Activated CD8-positive, alpha-beta T cell treated with anti-CD3 and anti-CD28 coated beads for 36 hours (primary cell): ENCODE measurements at regions of chr7 and their contacts with region 1.

Region 1: DNA sequence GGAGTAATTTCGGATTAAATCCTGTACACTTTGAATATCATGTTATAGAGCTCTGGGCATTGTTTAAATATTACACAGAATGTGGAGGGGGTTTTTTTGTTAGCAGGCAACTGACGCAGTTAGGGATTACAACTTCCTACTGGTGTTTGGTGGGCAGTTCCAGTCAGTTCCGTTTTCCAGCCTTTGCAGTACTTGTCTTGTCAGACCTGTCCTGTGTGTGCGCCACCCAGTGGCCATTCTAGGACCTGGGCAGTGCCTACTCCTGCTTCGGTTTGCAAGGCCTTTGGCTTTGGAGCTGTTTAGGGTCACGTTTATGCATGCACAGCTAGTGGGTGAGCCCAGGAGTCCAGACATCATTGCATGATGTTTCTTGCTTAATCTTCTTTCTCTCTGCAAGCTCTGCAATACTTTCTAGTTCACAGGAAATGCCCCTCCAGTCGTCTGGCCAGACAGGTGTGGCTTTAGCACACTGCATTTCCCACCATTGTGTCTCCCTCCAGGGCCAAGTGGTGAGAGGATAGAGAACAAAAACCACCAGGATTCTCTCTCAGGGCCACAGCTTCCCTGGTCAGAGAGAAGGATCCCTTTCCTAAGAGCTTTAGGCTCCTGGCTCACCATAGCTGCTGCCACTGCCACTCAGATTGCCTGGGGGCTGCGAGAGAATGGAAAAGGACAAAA is 96.5 kb upstream of the TARP start:
- DNase-seq: peak; percentile 94
- ATAC-seq: peak; percentile 78
- H3K4me3 Mint-ChIP-seq: no peak overlapping the region
- H3K27ac Mint-ChIP-seq: peak overlapping the region; percentile 73
- H3K4me1 Mint-ChIP-seq: peaks cover 61% of the 10 kb centered on the region
- H3K27me3 Mint-ChIP-seq: no peaks in the 10 kb centered on the region
- CTCF ChIP-seq: peak; percentile 83

Region 2: DNA sequence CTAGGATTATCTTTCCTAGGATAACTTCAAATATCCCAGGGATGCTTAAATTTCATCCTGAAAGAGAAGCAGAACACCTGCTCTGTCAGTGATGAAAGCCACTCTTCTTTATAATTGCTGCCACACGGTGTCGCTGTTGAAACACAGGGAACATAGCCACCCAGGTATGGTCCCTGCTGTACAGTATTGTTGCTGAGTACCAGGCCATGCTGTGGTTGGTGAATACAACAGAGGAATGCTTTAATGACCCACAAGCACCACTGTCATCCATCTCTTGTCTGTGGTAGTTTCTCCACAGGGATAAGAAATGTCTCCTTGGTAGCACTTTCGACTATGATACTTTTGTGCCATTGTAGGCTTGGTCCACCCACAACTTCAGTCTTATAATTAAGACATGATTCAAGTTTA is 262.5 kb before region 1 on chr7:
- CTCF ChIA-PET with region 1: interaction called, 67 read pairs
- POLR2A ChIA-PET with region 1: no interaction called
- intact Hi-C with region 1: loop called (anchors 1 kb)
- DNase-seq: peak; percentile 84
- ATAC-seq: peak; percentile 87
- H3K4me3 Mint-ChIP-seq: no peak overlapping the region
- H3K27ac Mint-ChIP-seq: no peak overlapping the region
- H3K4me1 Mint-ChIP-seq: peaks cover 2% of the 10 kb centered on the region
- H3K27me3 Mint-ChIP-seq: peaks cover 8% of the 10 kb centered on the region
- CTCF ChIP-seq: peak; percentile 86

Region 3: GRCh38 chr7:38195804-38196595 is 174.0 kb before region 1 on chr7:
- CTCF ChIA-PET with region 1: interaction called, 25 read pairs
- POLR2A ChIA-PET with region 1: no interaction called
- intact Hi-C with region 1: no loop called
- DNase-seq: no peak
- ATAC-seq: no peak
- H3K4me3 Mint-ChIP-seq: no peak overlapping the region
- H3K27ac Mint-ChIP-seq: no peak overlapping the region
- H3K4me1 Mint-ChIP-seq: peaks cover 42% of the 10 kb centered on the region
- H3K27me3 Mint-ChIP-seq: no peaks in the 10 kb centered on the region
- CTCF ChIP-seq: no peak

Region 4: DNA sequence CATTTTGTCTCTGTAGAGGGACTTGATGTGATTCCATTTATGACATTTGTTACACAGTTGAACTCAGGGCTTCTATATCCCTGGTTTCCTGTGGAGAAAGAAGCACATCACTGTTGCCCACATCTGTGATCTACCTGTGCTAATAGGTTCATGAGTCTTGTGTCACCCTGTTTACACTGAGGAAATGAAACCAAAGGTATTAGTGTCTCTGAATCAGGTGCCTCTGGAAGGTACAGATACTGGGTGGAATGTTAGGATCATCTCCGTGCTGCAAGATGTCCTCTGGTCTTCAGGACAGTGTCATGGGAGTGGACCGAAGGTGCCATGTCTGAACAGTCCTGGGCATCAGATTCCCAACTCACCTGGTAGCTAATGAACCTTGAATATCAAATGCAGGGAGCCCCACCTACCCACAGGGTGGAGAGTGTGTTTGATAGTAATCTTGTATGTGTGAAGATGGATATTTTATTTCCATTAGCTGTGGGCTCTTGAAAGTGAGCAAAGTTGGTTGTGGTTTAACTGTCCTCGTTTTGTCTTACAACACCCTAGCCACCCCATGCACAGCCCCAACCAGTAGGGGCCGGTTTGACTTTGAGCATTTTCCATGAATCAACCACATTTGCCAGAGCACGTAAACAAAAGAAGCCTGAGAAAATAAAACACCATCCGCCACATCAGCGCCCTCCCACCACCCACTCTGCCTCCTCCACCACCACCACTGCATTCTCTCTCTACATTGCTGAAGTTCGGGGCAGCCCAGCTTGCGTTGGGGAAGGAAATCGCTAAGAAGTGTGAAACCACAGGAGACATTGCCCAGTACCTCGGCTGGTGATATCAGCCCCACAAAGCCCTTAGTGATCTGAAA is 137.2 kb before region 1 on chr7:
- CTCF ChIA-PET with region 1: interaction called, 26 read pairs
- POLR2A ChIA-PET with region 1: interaction called, 3 read pairs
- intact Hi-C with region 1: loop called (anchors 5 kb)
- DNase-seq: peak; percentile 94
- ATAC-seq: peak; percentile 89
- H3K4me3 Mint-ChIP-seq: peak overlapping the region; percentile 43
- H3K27ac Mint-ChIP-seq: peak overlapping the region; percentile 90
- H3K4me1 Mint-ChIP-seq: peaks cover 77% of the 10 kb centered on the region
- H3K27me3 Mint-ChIP-seq: no peaks in the 10 kb centered on the region
- CTCF ChIP-seq: no peak

Region 5: DNA sequence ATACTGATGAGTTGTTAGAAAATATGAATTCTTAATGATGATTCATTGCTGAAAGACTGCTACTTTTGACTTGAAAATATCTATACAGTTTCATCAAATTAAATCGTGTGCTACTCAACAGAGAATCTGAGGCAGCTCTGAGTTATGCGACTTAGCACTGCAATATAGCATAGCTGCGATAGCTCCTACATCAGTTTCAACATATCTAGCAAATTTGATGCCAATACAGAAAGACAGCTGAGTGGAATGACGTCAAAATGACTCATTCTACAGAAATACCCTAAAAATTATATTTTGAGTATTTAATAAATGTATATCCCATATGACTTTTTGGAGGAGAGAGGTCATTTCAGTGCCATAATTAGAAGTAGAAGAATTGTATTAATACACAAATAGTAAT is 95.5 kb before region 1 on chr7:
- CTCF ChIA-PET with region 1: no interaction called
- POLR2A ChIA-PET with region 1: no interaction called
- intact Hi-C with region 1: no loop called
- DNase-seq: no peak
- ATAC-seq: no peak
- H3K4me3 Mint-ChIP-seq: peak overlapping the region; percentile 37
- H3K27ac Mint-ChIP-seq: no peak overlapping the region
- H3K4me1 Mint-ChIP-seq: no peaks in the 10 kb centered on the region
- H3K27me3 Mint-ChIP-seq: no peaks in the 10 kb centered on the region
- CTCF ChIP-seq: no peak

Region 6: GRCh38 chr7:38351601-38352000 is 18.4 kb before region 1 on chr7:
- CTCF ChIA-PET with region 1: interaction called, 71 read pairs
- POLR2A ChIA-PET with region 1: interaction called, 3 read pairs
- intact Hi-C with region 1: no loop called
- DNase-seq: no peak
- ATAC-seq: no peak
- H3K4me3 Mint-ChIP-seq: peak overlapping the region; percentile 96
- H3K27ac Mint-ChIP-seq: peak overlapping the region; percentile 96
- H3K4me1 Mint-ChIP-seq: peaks cover 40% of the 10 kb centered on the region
- H3K27me3 Mint-ChIP-seq: no peaks in the 10 kb centered on the region
- CTCF ChIP-seq: no peak

Region 7: DNA sequence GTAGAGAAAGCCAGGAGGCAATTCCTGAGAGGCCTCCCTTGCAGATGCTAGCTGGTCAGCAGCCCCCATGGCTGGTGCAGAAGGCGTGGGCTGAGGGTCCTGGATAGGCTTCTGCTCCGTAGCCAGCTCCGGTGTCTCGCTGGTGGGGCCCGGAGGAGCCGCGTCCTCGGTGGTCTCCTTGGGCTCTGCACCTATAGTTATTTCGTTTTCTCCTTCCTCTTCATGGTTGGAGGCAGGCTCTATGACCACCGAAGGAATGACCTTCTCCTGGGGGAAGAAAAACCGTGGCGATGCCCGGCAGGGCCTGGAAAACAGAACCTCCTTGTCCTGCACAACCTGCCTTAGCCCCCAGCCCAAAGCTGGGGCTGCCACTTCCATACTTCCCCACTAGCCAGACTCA is 21.8 kb after region 1 on chr7:
- CTCF ChIA-PET with region 1: interaction called, 21 read pairs
- POLR2A ChIA-PET with region 1: no interaction called
- intact Hi-C with region 1: no loop called
- DNase-seq: no peak
- ATAC-seq: no peak
- H3K4me3 Mint-ChIP-seq: no peak overlapping the region
- H3K27ac Mint-ChIP-seq: no peak overlapping the region
- H3K4me1 Mint-ChIP-seq: peaks cover 5% of the 10 kb centered on the region
- H3K27me3 Mint-ChIP-seq: no peaks in the 10 kb centered on the region
- CTCF ChIP-seq: no peak